ENCODE measurements at regions of chr16 and their contacts with region 1.

Region 1: GRCh38 chr16:30637942-30638341 is 12.8 kb upstream of the PRR14 start:
- DNase-seq: no peak
- H3K4me3 ChIP-seq: no peak overlapping the region
- CTCF ChIP-seq: peak; percentile 57

Region 2: GRCh38 chr16:30650369-30651123 is 12.6 kb after region 1 on chr16 and contains the start of gene PRR14:
- CTCF ChIA-PET with region 1: interaction called, 12 read pairs
- POLR2A ChIA-PET with region 1: interaction called, 3 read pairs
- DNase-seq: peak; percentile 94
- H3K4me3 ChIP-seq: peak within 1 kb of the TSS; percentile 86
- CTCF ChIP-seq: peak; percentile 8